A673 (cell line): ENCODE measurements at regions of chr6 and their contacts with region 1.

Region 1: DNA sequence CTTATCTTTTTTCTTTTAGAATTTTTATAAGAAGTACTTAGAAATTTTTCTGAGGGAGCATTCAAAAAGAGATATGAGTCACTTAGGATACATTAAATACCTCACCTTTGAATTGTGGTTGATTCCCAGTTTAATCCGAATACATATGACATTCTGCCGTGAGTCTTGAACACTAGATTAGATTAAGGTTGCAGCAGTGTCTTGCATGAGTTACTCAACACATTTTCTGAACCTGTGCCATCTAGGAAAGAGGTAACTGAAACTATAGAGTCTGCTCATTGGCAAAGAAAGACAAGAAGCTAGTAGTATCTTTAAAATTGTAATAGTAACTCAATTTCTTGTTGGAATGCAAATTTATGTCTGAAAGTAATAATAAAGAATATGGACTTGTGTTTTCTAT is 14.9 kb downstream of the PEX3 start:
- DNase-seq: no peak
- H3K4me3 ChIP-seq: no peak overlapping the region
- H3K27ac ChIP-seq: no peak overlapping the region
- H3K4me1 ChIP-seq: no peaks in the 10 kb centered on the region
- H3K27me3 ChIP-seq: no peaks in the 10 kb centered on the region
- CTCF ChIP-seq: no peak

Region 2: GRCh38 chr6:142756215-142756634 is 709.3 kb before region 1 on chr6:
- CTCF ChIA-PET with region 1: no interaction called
- POLR2A ChIA-PET with region 1: no interaction called
- intact Hi-C with region 1: no loop called
- DNase-seq: no peak
- H3K4me3 ChIP-seq: no peak overlapping the region
- H3K27ac ChIP-seq: no peak overlapping the region
- H3K4me1 ChIP-seq: no peaks in the 10 kb centered on the region
- H3K27me3 ChIP-seq: no peaks in the 10 kb centered on the region
- CTCF ChIP-seq: no peak

Region 3: DNA sequence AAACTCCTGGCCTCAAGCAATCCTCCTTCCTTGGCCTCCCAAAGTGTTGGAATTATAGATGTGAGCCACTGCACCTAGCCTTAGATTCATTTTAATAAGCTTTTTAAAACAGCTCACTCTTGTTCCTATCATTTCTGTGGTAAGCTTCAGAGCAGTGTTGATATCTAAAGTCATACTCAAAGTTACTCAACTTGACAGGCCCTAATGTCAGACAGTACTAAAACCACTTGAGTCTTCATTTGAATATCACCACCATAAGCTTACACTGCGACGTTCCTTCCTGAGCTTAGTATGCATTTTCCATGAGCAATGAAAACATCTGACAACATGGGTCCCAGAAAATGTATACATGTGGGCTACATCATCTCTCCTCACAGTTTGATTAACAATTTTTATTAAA is 40.0 kb after region 1 on chr6:
- CTCF ChIA-PET with region 1: no interaction called
- POLR2A ChIA-PET with region 1: interaction called, 10 read pairs
- intact Hi-C with region 1: no loop called
- DNase-seq: no peak
- H3K4me3 ChIP-seq: no peak overlapping the region
- H3K27ac ChIP-seq: no peak overlapping the region
- H3K4me1 ChIP-seq: no peaks in the 10 kb centered on the region
- H3K27me3 ChIP-seq: no peaks in the 10 kb centered on the region
- CTCF ChIP-seq: no peak